ENCODE measurements at regions of chr7 and their contacts with region 1.

Region 1: DNA sequence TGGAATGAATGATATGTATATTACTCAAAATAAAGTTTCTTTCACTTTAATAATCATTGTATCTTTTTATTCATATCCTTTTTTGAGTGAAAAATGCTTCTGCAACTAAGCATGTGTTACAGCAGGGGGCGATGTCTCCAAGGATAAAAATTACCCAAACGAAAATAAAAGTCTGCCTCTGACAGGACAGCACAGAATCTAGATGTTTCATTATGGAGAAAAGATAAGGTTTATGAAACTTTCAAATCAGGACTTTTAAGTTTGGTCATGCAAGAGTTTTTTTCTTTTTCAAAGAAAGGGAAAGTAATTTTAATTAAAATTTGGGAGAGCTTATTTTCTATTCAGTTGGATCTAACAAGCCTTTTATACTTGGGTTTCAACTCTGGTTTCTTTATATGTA is 48.4 kb downstream of the TES start:
- DNase-seq: peak in 20 of 35 experiments; percentile 3 to 68 (median 23)
- ATAC-seq: peak in 2 of 4 experiments; percentile 45 to 58
- H3K4me3 ChIP-seq: no peak overlapping the region
- H3K4me3 Mint-ChIP-seq: no peak overlapping the region
- H3K27ac ChIP-seq: no peak overlapping the region
- H3K27ac Mint-ChIP-seq: peak overlapping the region; percentile 43 to 55
- H3K4me1 ChIP-seq: no peaks in the 10 kb centered on the region
- H3K4me1 Mint-ChIP-seq: peaks cover 7 to 19% (median 15%) of the 10 kb centered on the region in 3 donors
- H3K27me3 ChIP-seq: no peaks in the 10 kb centered on the region
- H3K27me3 Mint-ChIP-seq: no peaks in the 10 kb centered on the region

Region 2: DNA sequence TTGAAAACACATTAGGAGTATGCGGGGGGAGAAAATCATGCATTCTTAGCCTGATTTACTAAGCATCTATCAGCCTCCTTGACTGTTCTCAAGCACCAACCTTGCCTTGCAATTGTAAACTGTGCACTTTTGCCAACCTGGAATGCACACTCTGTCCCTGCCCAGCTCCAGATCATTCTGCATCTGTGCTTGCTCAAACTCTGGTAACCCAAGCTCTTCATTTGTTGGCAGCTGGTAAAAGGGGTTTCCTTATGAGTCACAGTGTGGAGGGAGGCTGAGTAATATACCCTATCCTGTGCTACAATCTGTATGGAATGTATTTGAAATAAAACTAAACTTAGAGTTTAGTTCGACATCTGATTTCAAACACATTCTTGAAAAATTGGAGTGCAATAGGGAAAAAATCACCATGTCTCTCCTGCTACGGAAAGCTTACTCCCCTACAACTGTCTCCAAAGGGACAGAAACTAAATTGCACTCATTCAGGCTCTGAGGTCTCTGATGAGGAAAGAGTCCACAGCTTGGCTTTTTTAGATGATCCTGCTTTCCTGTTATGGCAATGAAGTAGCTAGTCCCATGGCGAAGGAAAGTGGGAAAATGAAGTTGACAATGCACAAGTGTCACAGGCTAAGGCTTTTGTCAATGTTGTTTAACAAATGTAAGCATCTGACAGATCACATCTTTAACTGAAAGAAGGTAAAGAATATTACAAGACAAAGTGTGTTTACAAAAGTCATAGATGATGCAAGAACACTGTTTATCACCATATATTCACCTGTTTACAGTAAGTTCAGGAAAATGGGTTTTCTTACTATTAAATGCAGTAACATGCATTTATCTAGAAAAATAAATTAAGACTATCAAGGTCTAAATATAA is 13.5 kb after region 1 on chr7:
- CTCF ChIA-PET with region 1: interaction called in 1 of 2 experiments, 16 read pairs
- POLR2A ChIA-PET with region 1: no interaction called
- DNase-seq: no peak
- ATAC-seq: no peak
- H3K4me3 ChIP-seq: no peak overlapping the region
- H3K4me3 Mint-ChIP-seq: no peak overlapping the region
- H3K27ac ChIP-seq: no peak overlapping the region
- H3K27ac Mint-ChIP-seq: no peak overlapping the region
- H3K4me1 ChIP-seq: no peaks in the 10 kb centered on the region
- H3K4me1 Mint-ChIP-seq: no peaks in the 10 kb centered on the region
- H3K27me3 ChIP-seq: no peaks in the 10 kb centered on the region
- H3K27me3 Mint-ChIP-seq: peaks cover 27 to 32% of the 10 kb centered on the region in 2 donors

Region 3: GRCh38 chr7:116340943-116341907 is 82.5 kb after region 1 on chr7:
- CTCF ChIA-PET with region 1: interaction called in 1 of 2 experiments, 11 read pairs
- POLR2A ChIA-PET with region 1: no interaction called
- DNase-seq: no peak
- ATAC-seq: no peak
- H3K4me3 ChIP-seq: no peak overlapping the region
- H3K4me3 Mint-ChIP-seq: no peak overlapping the region
- H3K27ac ChIP-seq: no peak overlapping the region
- H3K27ac Mint-ChIP-seq: no peak overlapping the region
- H3K4me1 ChIP-seq: no peaks in the 10 kb centered on the region
- H3K4me1 Mint-ChIP-seq: no peaks in the 10 kb centered on the region
- H3K27me3 ChIP-seq: no peaks in the 10 kb centered on the region
- H3K27me3 Mint-ChIP-seq: peaks cover 2 to 3% of the 10 kb centered on the region in 2 donors

Region 4: GRCh38 chr7:116588641-116589594 is 330.2 kb after region 1 on chr7:
- CTCF ChIA-PET with region 1: interaction called, 13 to 34 read pairs
- POLR2A ChIA-PET with region 1: no interaction called
- DNase-seq: peak in 1 of 35 experiments; percentile 64
- ATAC-seq: peak in 3 of 4 experiments; percentile 20 to 50 (median 43)
- H3K4me3 ChIP-seq: no peak overlapping the region
- H3K4me3 Mint-ChIP-seq: no peak overlapping the region
- H3K27ac ChIP-seq: no peak overlapping the region
- H3K27ac Mint-ChIP-seq: no peak overlapping the region
- H3K4me1 ChIP-seq: peaks cover 0 to 7% of the 10 kb centered on the region in 2 experiments
- H3K4me1 Mint-ChIP-seq: peaks cover 20 to 23% (median 20%) of the 10 kb centered on the region in 3 donors
- H3K27me3 ChIP-seq: peaks cover 0 to 8% of the 10 kb centered on the region in 2 experiments
- H3K27me3 Mint-ChIP-seq: peaks cover 22 to 25% of the 10 kb centered on the region in 2 donors

Region 5: GRCh38 chr7:116802746-116803152 is 544.0 kb after region 1 on chr7:
- CTCF ChIA-PET with region 1: no interaction called
- POLR2A ChIA-PET with region 1: interaction called in 1 of 2 experiments, 13 read pairs
- DNase-seq: peak in 8 of 35 experiments; percentile 1 to 39 (median 4)
- ATAC-seq: peak in 2 of 4 experiments; percentile 41 to 64
- H3K4me3 ChIP-seq: no peak overlapping the region
- H3K4me3 Mint-ChIP-seq: no peak overlapping the region
- H3K27ac ChIP-seq: no peak overlapping the region
- H3K27ac Mint-ChIP-seq: no peak overlapping the region
- H3K4me1 ChIP-seq: no peaks in the 10 kb centered on the region
- H3K4me1 Mint-ChIP-seq: peaks cover 0 to 3% (median 0%) of the 10 kb centered on the region in 3 donors
- H3K27me3 ChIP-seq: no peaks in the 10 kb centered on the region
- H3K27me3 Mint-ChIP-seq: peaks cover 19 to 23% of the 10 kb centered on the region in 2 donors

Measured in T-cell (primary cell).